SK-N-SH (cell line): ENCODE measurements at regions of chr17 and their contacts with region 1.

Region 1: GRCh38 chr17:1365445-1366039 is 34.5 kb downstream of the YWHAE start:
- DNase-seq: peak; percentile 75
- H3K4me3 ChIP-seq: peak overlapping the region in 1 of 2 experiments; percentile 29; a peak in 1 of 4 replicates
- H3K27ac ChIP-seq: peak overlapping the region in 1 of 2 experiments; percentile 48; a peak in 2 of 4 replicates
- H3K4me1 ChIP-seq: peaks cover 2 to 27% of the 10 kb centered on the region in 2 experiments; a peak in 2 of 4 replicates
- H3K27me3 ChIP-seq: no peaks in the 10 kb centered on the region
- CTCF ChIP-seq: peak; percentile 94
- EP300 ChIP-seq: no peak
- RAD21 ChIP-seq: peak; percentile 85

Region 2: DNA sequence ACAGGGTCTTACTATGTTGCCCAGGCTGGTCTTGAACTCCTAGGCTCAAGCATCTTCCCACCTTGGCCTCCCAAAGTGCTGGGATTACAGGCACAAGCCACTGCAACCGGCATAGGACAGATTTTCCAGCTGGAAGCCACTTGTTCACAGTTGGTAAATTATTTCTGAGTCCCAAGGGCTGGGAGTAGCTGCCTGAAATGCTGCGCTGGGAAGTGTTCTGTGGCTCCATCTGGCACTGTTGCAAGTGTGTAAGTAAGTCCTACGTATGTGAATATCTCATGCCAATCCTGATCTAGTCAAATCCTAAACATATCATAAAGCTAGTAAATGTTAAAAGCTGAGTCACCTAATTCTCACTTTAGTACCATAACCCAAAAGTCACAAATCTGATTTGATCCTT is 13.6 kb before region 1 on chr17:
- CTCF ChIA-PET with region 1: interaction called, 41 read pairs
- POLR2A ChIA-PET with region 1: no interaction called
- DNase-seq: no peak
- H3K4me3 ChIP-seq: no peak overlapping the region
- H3K27ac ChIP-seq: no peak overlapping the region
- H3K4me1 ChIP-seq: no peaks in the 10 kb centered on the region
- H3K27me3 ChIP-seq: no peaks in the 10 kb centered on the region
- CTCF ChIP-seq: no peak
- EP300 ChIP-seq: no peak
- RAD21 ChIP-seq: no peak

Region 3: DNA sequence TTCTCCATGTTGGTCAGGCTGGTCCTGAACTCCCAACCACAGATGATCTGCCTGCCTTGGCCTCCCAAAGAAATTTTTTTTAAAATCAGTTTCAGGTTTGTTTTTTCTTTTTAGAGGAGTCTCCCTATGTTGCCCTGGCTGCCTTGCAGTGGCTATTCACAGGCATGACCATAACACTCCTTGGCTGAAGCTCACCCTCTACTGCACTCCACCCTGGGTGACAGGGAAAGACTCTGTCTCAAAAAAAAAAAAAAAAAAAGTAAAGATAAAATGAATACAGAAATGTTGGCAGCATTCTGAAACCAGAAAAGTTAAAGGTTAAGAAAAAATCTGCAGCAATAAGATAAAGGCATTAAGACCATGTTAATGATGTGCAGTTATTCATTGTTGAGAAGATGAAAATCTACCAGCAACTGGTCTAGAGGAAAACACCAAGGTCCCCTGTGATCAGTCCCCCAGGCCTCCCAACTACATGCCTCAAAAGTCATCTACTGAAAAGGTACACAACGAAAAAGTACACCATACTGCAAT is 19.4 kb after region 1 on chr17:
- CTCF ChIA-PET with region 1: interaction called, 93 read pairs
- POLR2A ChIA-PET with region 1: no interaction called
- DNase-seq: no peak
- H3K4me3 ChIP-seq: no peak overlapping the region
- H3K27ac ChIP-seq: peak overlapping the region in 1 of 2 experiments; percentile 20; a peak in 1 of 4 replicates
- H3K4me1 ChIP-seq: peaks cover 0 to 23% of the 10 kb centered on the region in 2 experiments; a peak in 1 of 4 replicates
- H3K27me3 ChIP-seq: no peaks in the 10 kb centered on the region
- CTCF ChIP-seq: no peak
- EP300 ChIP-seq: no peak
- RAD21 ChIP-seq: no peak

Region 4: DNA sequence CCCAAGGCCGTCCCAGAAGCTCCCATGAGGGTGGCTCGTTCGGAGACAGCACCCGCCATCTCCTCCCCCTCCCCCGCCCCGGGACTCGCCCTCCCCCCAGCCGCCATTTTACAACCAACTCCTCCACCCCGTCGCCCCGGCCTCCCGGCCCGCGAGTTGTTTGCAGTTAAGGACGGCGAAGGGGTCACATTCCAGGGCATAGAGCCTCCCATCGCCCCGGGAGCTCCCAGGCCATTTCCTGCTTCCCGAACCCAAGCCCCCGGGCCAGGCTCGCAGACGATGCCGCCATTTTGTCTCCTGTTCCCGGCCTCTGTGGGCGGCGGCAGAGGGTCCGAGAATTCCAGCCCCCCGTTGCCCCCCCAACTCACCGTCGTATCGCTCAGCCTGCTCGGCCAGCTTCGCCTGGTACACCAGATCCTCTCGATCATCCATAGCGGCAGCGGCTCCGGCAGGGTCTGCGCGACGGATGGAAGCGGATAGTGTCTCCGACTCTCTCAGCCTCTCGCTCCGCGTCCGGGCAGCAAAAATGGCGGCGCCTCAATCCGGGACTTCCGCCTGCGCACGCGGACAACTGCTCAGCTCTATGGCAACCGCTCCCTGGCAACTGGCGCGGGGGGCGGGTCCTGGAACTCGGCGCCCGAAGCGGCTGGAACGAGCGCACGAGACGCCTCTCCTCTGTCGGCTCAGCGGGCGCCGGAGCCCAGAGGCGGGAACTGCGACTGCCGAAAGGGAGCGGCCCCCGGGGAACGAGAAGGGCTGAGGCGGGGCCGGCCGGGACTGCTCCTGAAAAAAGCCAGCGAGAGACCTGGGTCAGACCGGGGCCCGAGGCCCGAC is 34.4 kb after region 1 on chr17 and contains the start of gene YWHAE:
- CTCF ChIA-PET with region 1: interaction called, 13 read pairs
- POLR2A ChIA-PET with region 1: no interaction called
- DNase-seq: peak; percentile 96
- H3K4me3 ChIP-seq: peak within 1 kb of the TSS; percentile 68 to 99
- H3K27ac ChIP-seq: peak within 1 kb of the TSS; percentile 97
- H3K4me1 ChIP-seq: peaks cover 0 to 4% of the 10 kb centered on the region in 2 experiments; a peak in 2 of 4 replicates
- H3K27me3 ChIP-seq: no peaks in the 10 kb centered on the region
- CTCF ChIP-seq: no peak
- EP300 ChIP-seq: no peak
- RAD21 ChIP-seq: no peak
- polyA plus RNA-seq, gene YWHAE: 812 and 1,023 TPM in 2 replicates

Region 5: GRCh38 chr17:1516388-1517161 is 151.0 kb after region 1 on chr17 and contains the start of gene INPP5K:
- CTCF ChIA-PET with region 1: interaction called, 41 read pairs
- POLR2A ChIA-PET with region 1: no interaction called
- DNase-seq: peak; percentile 99
- H3K4me3 ChIP-seq: peak within 1 kb of the TSS; percentile 100
- H3K27ac ChIP-seq: peak within 1 kb of the TSS; percentile 78 to 86
- H3K4me1 ChIP-seq: peaks cover 0 to 19% of the 10 kb centered on the region in 2 experiments; a peak in 2 of 4 replicates
- H3K27me3 ChIP-seq: no peaks in the 10 kb centered on the region
- CTCF ChIP-seq: no peak
- EP300 ChIP-seq: no peak; a peak in 1 of 4 replicates
- RAD21 ChIP-seq: no peak
- polyA plus RNA-seq, gene INPP5K: 26.2 and 28.6 TPM in 2 replicates